ENCODE measurements at regions of chr22 and their contacts with region 1.

Region 1: DNA sequence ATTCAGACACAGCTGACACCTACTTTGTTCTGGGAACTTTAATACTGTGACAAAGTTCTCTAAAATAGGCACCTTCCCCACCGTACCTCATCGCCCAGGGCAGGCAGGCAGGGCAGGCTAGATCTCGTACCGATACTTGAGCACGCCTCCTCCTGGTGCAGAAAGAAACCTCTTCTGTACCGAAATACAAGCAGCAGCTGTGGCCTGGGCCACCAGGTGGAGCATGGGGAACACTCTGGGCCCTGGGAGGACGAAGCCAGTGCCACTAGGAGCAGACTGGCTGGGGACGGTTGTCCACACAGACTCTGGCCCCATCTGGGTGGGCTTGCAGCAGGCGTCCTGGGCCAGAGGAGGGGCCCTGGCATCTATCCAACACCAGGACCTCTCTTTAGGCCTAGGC is 12.8 kb downstream of the PMM1 start:
- DNase-seq: no peak
- ATAC-seq: peak; percentile 60
- H3K4me3 Mint-ChIP-seq: no peak overlapping the region
- H3K27ac Mint-ChIP-seq: no peak overlapping the region
- H3K4me1 Mint-ChIP-seq: no peaks in the 10 kb centered on the region
- H3K27me3 Mint-ChIP-seq: no peaks in the 10 kb centered on the region
- CTCF ChIP-seq: no peak

Region 2: DNA sequence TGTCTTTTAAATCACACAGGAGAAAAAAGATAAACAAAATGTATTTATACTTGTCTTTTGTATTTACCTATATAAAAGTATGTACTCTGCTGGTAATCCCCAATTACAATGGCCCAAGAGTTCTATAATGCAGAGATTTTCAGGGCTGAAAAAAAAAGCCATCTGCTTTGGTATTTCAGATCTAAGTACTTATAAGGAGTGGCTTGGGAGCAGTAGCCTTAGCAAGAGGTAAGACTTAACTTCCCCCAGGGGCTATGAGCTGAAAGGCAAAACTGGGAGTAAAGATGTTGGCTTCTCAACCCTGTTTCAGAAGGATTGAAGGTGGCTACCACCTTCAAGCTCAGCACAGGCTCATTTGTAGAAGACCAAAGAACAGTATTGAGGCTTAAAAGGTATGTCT is 519.8 kb before region 1 on chr22:
- CTCF ChIA-PET with region 1: no interaction called
- POLR2A ChIA-PET with region 1: interaction called, 11 read pairs
- intact Hi-C with region 1: no loop called
- DNase-seq: no peak
- ATAC-seq: no peak
- H3K4me3 Mint-ChIP-seq: no peak overlapping the region
- H3K27ac Mint-ChIP-seq: no peak overlapping the region
- H3K4me1 Mint-ChIP-seq: no peaks in the 10 kb centered on the region
- H3K27me3 Mint-ChIP-seq: no peaks in the 10 kb centered on the region
- CTCF ChIP-seq: no peak

Region 3: DNA sequence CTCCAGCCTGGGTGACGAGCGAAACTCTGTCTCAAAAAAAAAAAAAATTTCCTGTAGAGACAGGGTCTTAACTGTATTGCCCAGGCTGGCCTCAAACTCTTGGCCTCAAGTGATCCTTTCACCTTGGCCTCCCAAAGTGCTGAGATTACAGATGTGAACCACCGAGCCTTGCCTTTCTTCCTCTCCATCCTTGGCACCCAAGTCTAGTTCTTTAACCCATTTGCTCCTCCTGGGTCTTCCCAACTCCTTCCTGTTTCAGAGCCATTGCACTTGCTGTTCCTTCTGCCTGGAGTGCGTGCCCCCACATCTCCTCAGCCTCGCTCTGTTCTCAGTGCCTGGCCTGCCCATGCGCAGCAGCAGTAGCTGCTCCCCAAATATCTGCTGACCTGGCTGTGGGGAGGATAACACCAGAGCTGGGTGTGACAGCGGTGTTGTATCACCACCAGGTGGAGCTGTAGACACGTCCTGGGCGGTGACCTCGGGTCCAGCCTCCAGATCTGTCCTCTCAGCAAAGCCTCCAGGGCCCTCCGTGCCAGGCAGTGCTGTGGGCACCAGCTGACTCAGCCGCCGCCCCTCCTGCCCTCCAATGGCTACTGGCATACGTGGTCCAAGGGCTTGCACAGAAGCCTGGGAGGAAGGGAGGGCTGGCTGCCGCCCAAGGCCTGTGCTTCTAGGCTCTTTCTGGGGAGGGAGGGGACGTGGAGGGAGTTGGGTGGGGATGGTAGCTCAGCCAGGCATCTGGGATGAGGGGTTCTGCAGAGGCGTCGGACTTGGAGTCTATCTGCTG is 173.2 kb before region 1 on chr22:
- CTCF ChIA-PET with region 1: no interaction called
- POLR2A ChIA-PET with region 1: no interaction called
- intact Hi-C with region 1: no loop called
- DNase-seq: peak; percentile 69
- ATAC-seq: peak; percentile 87
- H3K4me3 Mint-ChIP-seq: no peak overlapping the region
- H3K27ac Mint-ChIP-seq: peak overlapping the region; percentile 20
- H3K4me1 Mint-ChIP-seq: peaks cover 37% of the 10 kb centered on the region
- H3K27me3 Mint-ChIP-seq: no peaks in the 10 kb centered on the region
- CTCF ChIP-seq: peak; percentile 33

Region 4: DNA sequence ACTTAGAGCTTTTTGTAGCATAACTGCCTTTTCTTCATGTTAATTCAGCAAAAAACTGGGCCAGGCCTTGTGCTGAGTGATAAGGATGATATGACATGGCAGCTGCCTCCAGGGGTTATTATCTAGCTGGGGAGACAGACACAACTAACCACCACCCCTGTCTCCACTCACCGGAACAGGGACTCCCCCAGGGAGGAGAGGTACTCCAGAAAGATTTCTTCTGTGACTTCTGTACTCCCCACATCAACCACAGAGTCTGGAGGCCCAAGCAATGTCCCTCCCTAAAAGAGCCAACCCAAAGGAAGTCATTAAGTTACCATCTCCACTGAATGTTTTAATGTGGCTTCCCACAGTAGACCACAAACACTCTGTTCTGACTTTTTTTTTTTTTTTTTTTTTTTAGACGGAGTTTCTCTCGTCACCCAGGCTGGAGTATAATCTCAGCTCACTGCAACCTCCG is 27.0 kb after region 1 on chr22:
- CTCF ChIA-PET with region 1: no interaction called
- POLR2A ChIA-PET with region 1: no interaction called
- intact Hi-C with region 1: no loop called
- DNase-seq: no peak
- ATAC-seq: peak; percentile 95
- H3K4me3 Mint-ChIP-seq: no peak overlapping the region
- H3K27ac Mint-ChIP-seq: peak overlapping the region; percentile 35
- H3K4me1 Mint-ChIP-seq: peaks cover 7% of the 10 kb centered on the region
- H3K27me3 Mint-ChIP-seq: no peaks in the 10 kb centered on the region
- CTCF ChIP-seq: no peak